Sigmoid colon (tissue), 7 donors: ENCODE measurements at regions of chr14 and their contacts with region 1.

Region 1: DNA sequence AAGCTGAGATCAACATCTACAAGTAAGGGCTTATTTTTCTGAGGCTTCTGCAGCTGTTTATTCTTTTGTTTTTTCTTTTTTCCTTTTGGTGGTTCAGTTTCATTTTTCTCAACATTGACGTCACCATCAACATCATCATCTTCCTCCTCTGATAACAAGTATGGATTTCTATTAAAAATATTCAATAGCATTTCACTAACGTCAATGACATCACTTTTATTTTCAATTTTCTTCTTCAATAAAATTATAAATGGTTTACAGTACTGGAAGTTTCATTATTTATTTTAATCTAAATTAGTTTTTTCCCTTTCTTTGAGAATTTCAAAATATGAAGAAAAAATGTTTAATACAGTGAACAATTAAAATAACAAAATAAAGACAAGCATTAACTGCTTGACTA is 23.9 kb downstream of the NEMF start:
- DNase-seq: no peak
- H3K4me3 ChIP-seq: no peak overlapping the region
- H3K27ac ChIP-seq: no peak overlapping the region
- H3K4me1 ChIP-seq: no peaks in the 10 kb centered on the region
- H3K27me3 ChIP-seq: no peaks in the 10 kb centered on the region
- CTCF ChIP-seq: no peak
- EP300 ChIP-seq: no peak
- POLR2A ChIP-seq: no peak

Region 2: DNA sequence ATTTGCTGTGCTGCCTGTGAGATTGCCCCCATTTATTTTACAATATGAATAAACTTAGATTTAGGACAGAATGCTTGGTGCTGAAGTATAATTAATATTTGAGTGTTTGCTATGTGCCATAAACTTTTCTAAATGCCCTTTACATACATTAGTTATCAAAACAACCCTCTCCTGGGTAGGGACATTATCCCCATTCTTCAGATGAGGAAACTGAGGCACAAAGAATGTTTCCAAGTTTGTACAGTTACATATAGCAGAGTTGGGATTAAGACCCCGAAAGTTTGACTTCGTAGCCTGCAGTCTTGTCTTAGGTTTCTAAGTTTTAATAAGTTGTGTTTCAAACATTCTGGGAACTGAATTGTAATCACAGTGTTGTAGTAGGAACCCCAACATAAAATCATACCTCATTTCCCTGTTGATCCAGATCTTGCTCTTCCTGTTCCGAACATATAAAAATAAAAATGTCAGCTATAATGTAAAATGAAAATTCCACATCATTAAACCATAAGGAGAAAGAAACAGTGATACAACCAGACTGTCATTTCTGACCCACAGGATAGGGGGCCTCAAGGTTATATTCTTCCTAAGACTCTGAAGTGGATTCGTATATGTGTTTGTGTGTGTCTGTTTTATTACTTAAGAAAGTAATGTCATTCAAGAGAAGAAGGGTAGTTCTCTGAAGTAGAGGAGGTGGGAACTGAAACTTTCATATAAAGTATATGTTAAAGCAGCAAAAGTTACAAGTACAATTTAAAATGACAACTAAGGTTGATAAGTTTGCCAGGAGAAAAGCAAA is 42.1 kb before region 1 on chr14:
- intact Hi-C with region 1: loop called (anchors 10 kb)
- DNase-seq: no peak
- H3K4me3 ChIP-seq: no peak overlapping the region
- H3K27ac ChIP-seq: no peak overlapping the region
- H3K4me1 ChIP-seq: no peaks in the 10 kb centered on the region
- H3K27me3 ChIP-seq: no peaks in the 10 kb centered on the region
- CTCF ChIP-seq: no peak
- EP300 ChIP-seq: no peak
- POLR2A ChIP-seq: no peak